ENCODE measurements at regions of chr4 and their contacts with region 1.

Region 1: GRCh38 chr4:118772081-118772766 is 63.7 kb downstream of the SEC24D start:
- DNase-seq: no peak
- H3K4me3 Mint-ChIP-seq: no peak overlapping the region
- H3K27ac Mint-ChIP-seq: no peak overlapping the region
- H3K4me1 Mint-ChIP-seq: no peaks in the 10 kb centered on the region
- H3K27me3 Mint-ChIP-seq: no peaks in the 10 kb centered on the region

Region 2: GRCh38 chr4:118865091-118865708 is 93.0 kb after region 1 on chr4:
- intact Hi-C with region 1: loop called (anchors 1 kb)
- DNase-seq: no peak
- H3K4me3 Mint-ChIP-seq: no peak overlapping the region
- H3K27ac Mint-ChIP-seq: no peak overlapping the region
- H3K4me1 Mint-ChIP-seq: no peaks in the 10 kb centered on the region
- H3K27me3 Mint-ChIP-seq: peaks cover 14% of the 10 kb centered on the region

Region 3: DNA sequence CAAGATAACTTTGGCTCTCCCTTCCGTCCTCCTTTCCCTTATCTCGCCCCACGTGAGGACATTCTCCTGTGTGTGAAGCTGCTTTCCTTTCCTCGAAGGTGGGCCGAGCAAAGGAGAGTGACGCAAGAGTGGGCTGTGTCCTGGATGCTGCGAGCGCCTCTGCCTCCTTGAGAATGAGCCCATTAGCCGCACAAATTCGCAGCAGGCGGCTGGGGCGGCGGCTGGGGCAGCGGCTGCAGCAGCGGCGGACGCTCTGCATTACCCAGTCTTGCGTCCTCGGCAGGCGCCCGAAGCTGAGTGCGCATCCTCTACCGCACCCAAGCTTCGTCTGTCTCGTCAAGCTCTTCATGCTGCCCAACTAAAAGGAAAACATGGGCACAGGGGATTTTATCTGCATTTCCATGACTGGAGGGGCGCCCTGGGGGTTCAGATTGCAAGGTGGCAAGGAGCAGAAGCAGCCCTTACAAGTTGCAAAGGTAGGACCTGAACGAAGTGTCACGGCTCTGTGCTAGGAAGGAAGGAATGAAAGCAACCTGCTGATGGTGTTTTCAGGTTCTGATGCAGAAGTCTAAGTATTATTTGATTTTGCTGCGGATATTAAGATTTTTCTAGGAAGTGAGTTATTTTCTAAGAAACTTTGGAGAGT is 116.6 kb after region 1 on chr4 and contains the start of gene SYNPO2:
- intact Hi-C with region 1: loop called (anchors 1 kb)
- DNase-seq: peak; percentile 21
- H3K4me3 Mint-ChIP-seq: peak within 1 kb of the TSS; percentile 83
- H3K27ac Mint-ChIP-seq: no peak within 1 kb of the TSS
- H3K4me1 Mint-ChIP-seq: peaks cover 21% of the 10 kb centered on the region
- H3K27me3 Mint-ChIP-seq: peaks cover 39% of the 10 kb centered on the region
- total RNA-seq, gene SYNPO2: 0.12 and 0.26 TPM in 2 replicates

Region 4: DNA sequence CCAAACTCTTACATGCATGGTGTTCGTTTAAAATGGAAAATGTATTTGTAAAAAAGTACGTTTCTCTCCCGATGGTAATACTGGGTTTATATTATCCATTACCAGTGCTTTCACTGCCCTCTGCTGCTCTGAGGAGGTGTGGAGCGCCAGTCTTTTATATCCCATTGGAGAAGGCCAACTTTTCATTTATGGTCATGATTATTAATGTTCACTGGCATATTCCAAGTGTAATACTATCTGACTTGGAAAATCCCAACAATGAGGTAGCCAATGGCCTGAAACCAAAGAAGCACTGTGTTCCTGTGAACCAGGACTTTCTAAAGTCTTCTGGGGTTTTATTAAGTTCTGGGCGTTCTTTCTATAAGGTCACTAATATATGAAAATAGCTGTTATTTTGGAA is 197.1 kb after region 1 on chr4:
- intact Hi-C with region 1: loop called (anchors 1 kb)
- DNase-seq: no peak
- H3K4me3 Mint-ChIP-seq: no peak overlapping the region
- H3K27ac Mint-ChIP-seq: no peak overlapping the region
- H3K4me1 Mint-ChIP-seq: peaks cover 16% of the 10 kb centered on the region
- H3K27me3 Mint-ChIP-seq: peaks cover 4% of the 10 kb centered on the region

Region 5: GRCh38 chr4:118981839-118982381 is 209.7 kb after region 1 on chr4:
- intact Hi-C with region 1: loop called (anchors 1 kb)
- DNase-seq: peak; percentile 20
- H3K4me3 Mint-ChIP-seq: no peak overlapping the region
- H3K27ac Mint-ChIP-seq: no peak overlapping the region
- H3K4me1 Mint-ChIP-seq: no peaks in the 10 kb centered on the region
- H3K27me3 Mint-ChIP-seq: peaks cover 4% of the 10 kb centered on the region

Region 6: DNA sequence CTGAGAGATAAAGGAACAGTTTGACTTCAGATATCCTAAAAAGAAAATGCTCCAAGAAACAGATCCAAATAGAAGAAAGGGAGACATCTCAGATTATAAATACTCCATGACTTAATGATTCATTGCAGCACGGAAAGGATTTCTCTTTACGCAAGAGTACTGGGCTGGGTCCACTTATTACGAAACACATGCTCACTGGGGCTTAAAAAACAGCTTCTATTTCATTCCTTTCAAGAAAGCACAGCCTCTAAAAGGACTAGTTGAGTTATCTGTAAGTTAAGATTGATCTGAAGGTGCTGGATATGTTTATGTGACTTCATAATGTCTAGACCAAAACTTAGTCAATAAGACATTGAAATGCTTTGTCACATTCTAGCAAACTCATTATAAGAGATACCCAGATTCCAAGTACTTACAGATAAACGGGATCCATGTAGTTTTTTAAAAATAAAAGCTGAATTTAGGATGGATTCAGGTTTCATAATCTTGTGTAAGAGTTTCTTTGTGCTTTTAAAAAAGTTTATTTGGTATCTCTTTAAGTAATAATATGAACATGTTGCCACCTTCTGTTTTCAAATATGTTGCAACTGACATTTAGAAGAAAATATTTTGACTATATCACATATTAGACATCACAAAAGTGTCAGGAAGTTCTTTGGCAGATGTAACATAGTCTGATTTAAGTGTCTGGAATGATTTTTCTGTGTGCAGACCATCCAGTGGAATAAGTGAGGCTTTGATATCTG is 253.9 kb after region 1 on chr4:
- intact Hi-C with region 1: no loop called
- DNase-seq: no peak
- H3K4me3 Mint-ChIP-seq: no peak overlapping the region
- H3K27ac Mint-ChIP-seq: no peak overlapping the region
- H3K4me1 Mint-ChIP-seq: no peaks in the 10 kb centered on the region
- H3K27me3 Mint-ChIP-seq: peaks cover 15% of the 10 kb centered on the region

Region 7: DNA sequence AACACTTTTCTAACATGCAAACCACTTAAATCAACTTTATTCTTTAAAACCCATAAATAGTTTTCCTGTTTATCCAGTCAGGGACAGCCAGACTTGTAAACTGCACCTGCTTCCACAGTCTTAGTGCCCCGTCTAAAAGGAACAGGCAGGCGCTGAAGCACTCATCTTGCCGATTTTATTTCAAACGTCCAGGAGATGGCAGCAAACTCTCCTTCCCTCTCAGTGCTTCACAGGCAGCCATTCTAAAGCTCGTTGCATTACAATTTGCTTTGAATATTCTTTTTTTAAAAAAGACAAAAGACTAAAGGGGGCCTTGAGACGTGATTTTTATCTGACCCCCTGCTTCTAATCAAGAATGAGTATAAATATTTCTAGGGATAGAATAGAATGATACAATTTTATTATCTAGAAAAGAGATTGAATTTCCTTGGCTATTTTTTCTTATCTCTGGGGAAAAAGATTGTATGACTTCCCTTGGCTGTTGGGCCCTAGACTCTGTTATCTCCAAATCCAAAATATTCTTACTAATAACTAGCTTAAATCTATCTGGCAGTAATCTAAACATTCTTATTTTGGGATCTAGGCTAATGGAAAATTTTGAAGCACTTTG is 269.8 kb after region 1 on chr4:
- intact Hi-C with region 1: loop called (anchors 5 kb)
- DNase-seq: peak; percentile 40
- H3K4me3 Mint-ChIP-seq: no peak overlapping the region
- H3K27ac Mint-ChIP-seq: no peak overlapping the region
- H3K4me1 Mint-ChIP-seq: peaks cover 6% of the 10 kb centered on the region
- H3K27me3 Mint-ChIP-seq: no peaks in the 10 kb centered on the region

Region 8: GRCh38 chr4:119286377-119287002 is 514.3 kb after region 1 on chr4:
- intact Hi-C with region 1: loop called (anchors 5 kb)
- DNase-seq: no peak
- H3K4me3 Mint-ChIP-seq: no peak overlapping the region
- H3K27ac Mint-ChIP-seq: no peak overlapping the region
- H3K4me1 Mint-ChIP-seq: peaks cover 12% of the 10 kb centered on the region
- H3K27me3 Mint-ChIP-seq: no peaks in the 10 kb centered on the region

Measured in activated T-helper 1 cell treated with anti-CD3 and anti-CD28 coated beads, Interleukin-12 subunit alpha, Interleukin-12 subunit beta, Interleukin-2, Interleukin-4 antibody, amounts not matched to agents 30 ng/mL and 10 ng/mL and 1 ng/mL, durations not matched to agents 14 hours and 24 hours and 36 hours (primary cell).